CD4-positive, alpha-beta T cell (primary cell): ENCODE measurements at regions of chr11 and their contacts with region 1.

Region 1: GRCh38 chr11:13861411-13861810 is 101.1 kb upstream of the SPON1 start:
- DNase-seq: peak in 7 of 14 experiments; percentile 8 to 55 (median 24)
- ATAC-seq: peak; percentile 45
- H3K4me3 ChIP-seq: no peak overlapping the region
- H3K4me3 Mint-ChIP-seq: no peak overlapping the region
- H3K27ac ChIP-seq: no peak overlapping the region
- H3K27ac Mint-ChIP-seq: peak overlapping the region; percentile 72
- H3K4me1 ChIP-seq: peaks cover 21% of the 10 kb centered on the region
- H3K4me1 Mint-ChIP-seq: peaks cover 27% of the 10 kb centered on the region
- H3K27me3 ChIP-seq: no peaks in the 10 kb centered on the region
- H3K27me3 Mint-ChIP-seq: no peaks in the 10 kb centered on the region
- CTCF ChIP-seq: no peak

Region 2: DNA sequence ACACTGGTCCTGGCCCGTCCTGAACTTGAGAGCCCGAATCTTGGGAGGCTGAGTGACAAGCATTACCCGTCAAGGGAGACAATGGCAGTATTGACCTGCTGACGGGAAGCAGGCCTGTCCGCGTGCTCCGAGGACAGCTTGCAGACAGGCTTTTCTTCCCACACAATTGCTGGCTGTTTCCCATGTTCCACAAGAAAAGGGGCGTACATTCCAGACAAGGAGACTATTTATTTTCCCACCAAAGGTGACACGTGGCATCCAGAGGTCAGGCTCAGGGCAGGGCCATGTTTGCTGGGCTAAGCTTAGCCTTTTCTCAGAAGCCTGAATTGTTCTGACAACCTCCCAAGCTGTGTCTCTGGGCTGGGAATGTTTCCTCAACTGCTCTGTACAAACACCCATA is 14.2 kb after region 1 on chr11:
- CTCF ChIA-PET with region 1: no interaction called
- POLR2A ChIA-PET with region 1: no interaction called
- intact Hi-C with region 1: no loop called
- DNase-seq: no peak
- ATAC-seq: no peak
- H3K4me3 ChIP-seq: no peak overlapping the region
- H3K4me3 Mint-ChIP-seq: no peak overlapping the region
- H3K27ac ChIP-seq: no peak overlapping the region
- H3K27ac Mint-ChIP-seq: no peak overlapping the region
- H3K4me1 ChIP-seq: no peaks in the 10 kb centered on the region
- H3K4me1 Mint-ChIP-seq: peaks cover 29% of the 10 kb centered on the region
- H3K27me3 ChIP-seq: no peaks in the 10 kb centered on the region
- H3K27me3 Mint-ChIP-seq: no peaks in the 10 kb centered on the region
- CTCF ChIP-seq: no peak

Region 3: DNA sequence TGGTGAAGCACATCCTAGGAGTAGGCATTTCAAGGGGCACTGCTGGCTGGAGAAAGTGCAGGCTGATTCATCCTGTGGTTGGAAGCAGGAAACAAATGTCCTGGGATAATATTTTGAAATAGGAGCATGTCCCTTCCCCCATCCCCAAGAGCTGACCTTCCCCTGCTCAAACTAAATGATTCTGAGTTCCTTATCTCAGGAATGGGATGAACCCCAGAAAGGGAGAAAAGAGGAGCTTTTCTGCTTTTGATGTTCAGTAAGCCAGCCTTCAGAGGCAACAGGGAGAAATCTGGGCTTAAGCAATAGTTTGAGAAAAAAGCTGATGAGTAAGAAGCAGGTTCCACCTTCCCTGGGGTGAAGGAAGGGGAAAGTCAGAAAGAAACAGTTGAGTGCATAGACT is 81.6 kb after region 1 on chr11:
- CTCF ChIA-PET with region 1: no interaction called
- POLR2A ChIA-PET with region 1: no interaction called
- intact Hi-C with region 1: loop called in 1 of 2 experiments (anchors 2 kb)
- DNase-seq: no peak
- ATAC-seq: no peak
- H3K4me3 ChIP-seq: no peak overlapping the region
- H3K4me3 Mint-ChIP-seq: no peak overlapping the region
- H3K27ac ChIP-seq: no peak overlapping the region
- H3K27ac Mint-ChIP-seq: no peak overlapping the region
- H3K4me1 ChIP-seq: peaks cover 56% of the 10 kb centered on the region
- H3K4me1 Mint-ChIP-seq: peaks cover 71% of the 10 kb centered on the region
- H3K27me3 ChIP-seq: no peaks in the 10 kb centered on the region
- H3K27me3 Mint-ChIP-seq: no peaks in the 10 kb centered on the region
- CTCF ChIP-seq: no peak

Region 4: DNA sequence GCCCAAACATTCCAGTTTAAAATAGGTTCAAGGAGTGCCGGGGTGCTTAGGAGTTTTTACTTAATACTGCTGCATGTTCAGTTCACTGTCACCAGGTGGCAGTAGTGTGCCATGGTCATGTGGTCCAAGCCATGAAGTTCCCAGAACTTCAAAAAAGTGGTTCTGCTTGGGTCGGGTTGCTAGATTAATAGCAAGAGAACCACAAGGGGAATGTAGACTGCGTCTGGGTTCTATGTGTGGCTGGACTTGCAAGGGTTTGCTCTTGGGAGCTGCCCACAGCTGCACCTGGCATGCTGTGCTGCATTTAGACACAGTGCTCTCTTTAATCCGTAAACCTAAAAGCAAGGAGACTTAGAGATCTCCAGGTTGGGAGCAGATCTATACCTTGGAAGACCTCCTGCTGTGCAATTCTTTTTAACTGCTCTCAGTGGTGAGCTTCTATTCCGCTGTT is 94.6 kb after region 1 on chr11:
- CTCF ChIA-PET with region 1: no interaction called
- POLR2A ChIA-PET with region 1: no interaction called
- intact Hi-C with region 1: loop called (anchors 5 kb)
- DNase-seq: peak; percentile 32 to 89 (median 52)
- ATAC-seq: peak; percentile 77
- H3K4me3 ChIP-seq: no peak overlapping the region
- H3K4me3 Mint-ChIP-seq: no peak overlapping the region
- H3K27ac ChIP-seq: no peak overlapping the region
- H3K27ac Mint-ChIP-seq: no peak overlapping the region
- H3K4me1 ChIP-seq: peaks cover 10% of the 10 kb centered on the region
- H3K4me1 Mint-ChIP-seq: no peaks in the 10 kb centered on the region
- H3K27me3 ChIP-seq: peaks cover 3 to 4% of the 10 kb centered on the region in 2 experiments
- H3K27me3 Mint-ChIP-seq: peaks cover 26% of the 10 kb centered on the region
- CTCF ChIP-seq: peak; percentile 86

Region 5: GRCh38 chr11:13962562-13963168 is 101.3 kb after region 1 on chr11 and contains the start of gene SPON1:
- CTCF ChIA-PET with region 1: no interaction called
- POLR2A ChIA-PET with region 1: interaction called, 7 read pairs
- intact Hi-C with region 1: loop called (anchors 5 kb)
- DNase-seq: peak; percentile 30 to 74 (median 52)
- ATAC-seq: peak; percentile 84
- H3K4me3 ChIP-seq: peak within 1 kb of the TSS; percentile 45
- H3K4me3 Mint-ChIP-seq: peak within 1 kb of the TSS; percentile 83
- H3K27ac ChIP-seq: no peak within 1 kb of the TSS
- H3K27ac Mint-ChIP-seq: no peak within 1 kb of the TSS
- H3K4me1 ChIP-seq: peaks cover 24% of the 10 kb centered on the region
- H3K4me1 Mint-ChIP-seq: peaks cover 13% of the 10 kb centered on the region
- H3K27me3 ChIP-seq: peaks cover 33 to 59% of the 10 kb centered on the region in 2 experiments
- H3K27me3 Mint-ChIP-seq: peaks cover 75% of the 10 kb centered on the region
- CTCF ChIP-seq: no peak
- total RNA-seq, gene SPON1: 2.1 to 2.2 TPM

Region 6: GRCh38 chr11:13997881-13998280 is 136.5 kb after region 1 on chr11:
- CTCF ChIA-PET with region 1: no interaction called
- POLR2A ChIA-PET with region 1: no interaction called
- intact Hi-C with region 1: no loop called
- DNase-seq: no peak
- ATAC-seq: no peak
- H3K4me3 ChIP-seq: no peak overlapping the region
- H3K4me3 Mint-ChIP-seq: no peak overlapping the region
- H3K27ac ChIP-seq: no peak overlapping the region
- H3K27ac Mint-ChIP-seq: no peak overlapping the region
- H3K4me1 ChIP-seq: no peaks in the 10 kb centered on the region
- H3K4me1 Mint-ChIP-seq: no peaks in the 10 kb centered on the region
- H3K27me3 ChIP-seq: peaks cover 3% of the 10 kb centered on the region in 2 experiments
- H3K27me3 Mint-ChIP-seq: peaks cover 6% of the 10 kb centered on the region
- CTCF ChIP-seq: no peak

Region 7: DNA sequence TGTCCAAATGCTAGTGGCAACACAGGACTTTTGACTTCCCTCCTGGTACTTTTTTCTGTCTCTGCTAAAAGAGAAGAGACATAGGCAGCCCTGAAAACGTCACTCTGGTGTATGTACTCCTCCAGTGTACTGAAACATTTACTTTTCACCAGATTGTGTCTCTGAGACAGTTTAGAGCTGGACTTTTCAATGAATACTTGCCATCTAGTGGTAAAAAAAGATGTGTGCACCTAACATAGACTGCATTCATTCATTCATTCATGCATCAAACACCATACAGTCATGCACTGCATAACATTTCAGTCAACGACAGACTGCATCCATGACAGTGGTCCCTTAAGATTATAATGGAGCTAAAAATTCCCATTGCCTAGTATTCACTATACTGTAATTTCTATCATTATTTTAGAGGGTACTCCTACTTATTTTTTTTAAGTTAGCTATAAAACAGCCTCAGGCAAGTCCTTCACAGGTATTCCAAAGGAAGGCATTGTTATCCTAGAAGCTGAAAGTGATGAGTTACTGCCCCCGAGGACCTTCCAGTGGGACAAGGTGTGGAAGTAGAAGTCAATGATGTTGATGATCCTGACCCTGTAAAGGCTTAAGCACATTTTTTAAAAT is 287.4 kb after region 1 on chr11:
- CTCF ChIA-PET with region 1: interaction called, 4 read pairs
- POLR2A ChIA-PET with region 1: no interaction called
- intact Hi-C with region 1: loop called (anchors 2 to 10 kb)
- DNase-seq: peak in 3 of 14 experiments; percentile 56 to 64 (median 63)
- ATAC-seq: peak; percentile 97
- H3K4me3 ChIP-seq: no peak overlapping the region
- H3K4me3 Mint-ChIP-seq: no peak overlapping the region
- H3K27ac ChIP-seq: no peak overlapping the region
- H3K27ac Mint-ChIP-seq: no peak overlapping the region
- H3K4me1 ChIP-seq: no peaks in the 10 kb centered on the region
- H3K4me1 Mint-ChIP-seq: peaks cover 5% of the 10 kb centered on the region
- H3K27me3 ChIP-seq: no peaks in the 10 kb centered on the region
- H3K27me3 Mint-ChIP-seq: no peaks in the 10 kb centered on the region
- CTCF ChIP-seq: peak; percentile 68

Region 8: GRCh38 chr11:14249121-14249963 is 387.9 kb after region 1 on chr11:
- CTCF ChIA-PET with region 1: no interaction called
- POLR2A ChIA-PET with region 1: no interaction called
- intact Hi-C with region 1: loop called in 1 of 2 experiments (anchors 1 kb)
- DNase-seq: peak; percentile 53 to 83 (median 68)
- ATAC-seq: peak; percentile 68
- H3K4me3 ChIP-seq: peak overlapping the region; percentile 36
- H3K4me3 Mint-ChIP-seq: peak overlapping the region; percentile 62
- H3K27ac ChIP-seq: no peak overlapping the region
- H3K27ac Mint-ChIP-seq: no peak overlapping the region
- H3K4me1 ChIP-seq: peaks cover 12% of the 10 kb centered on the region
- H3K4me1 Mint-ChIP-seq: peaks cover 28% of the 10 kb centered on the region
- H3K27me3 ChIP-seq: no peaks in the 10 kb centered on the region
- H3K27me3 Mint-ChIP-seq: no peaks in the 10 kb centered on the region
- CTCF ChIP-seq: peak; percentile 98

Region 9: GRCh38 chr11:14554959-14555358 is 693.5 kb after region 1 on chr11:
- CTCF ChIA-PET with region 1: no interaction called
- POLR2A ChIA-PET with region 1: no interaction called
- intact Hi-C with region 1: no loop called
- DNase-seq: peak in 8 of 14 experiments; percentile 7 to 89 (median 46)
- ATAC-seq: peak; percentile 90
- H3K4me3 ChIP-seq: no peak overlapping the region
- H3K4me3 Mint-ChIP-seq: peak overlapping the region; percentile 56
- H3K27ac ChIP-seq: peak overlapping the region; percentile 35 to 51
- H3K27ac Mint-ChIP-seq: peak overlapping the region; percentile 92
- H3K4me1 ChIP-seq: peaks cover 3% of the 10 kb centered on the region
- H3K4me1 Mint-ChIP-seq: peaks cover 47% of the 10 kb centered on the region
- H3K27me3 ChIP-seq: no peaks in the 10 kb centered on the region
- H3K27me3 Mint-ChIP-seq: no peaks in the 10 kb centered on the region
- CTCF ChIP-seq: no peak